H1 (cell line): ENCODE measurements at regions of chr12 and their contacts with region 1.

Region 1: DNA sequence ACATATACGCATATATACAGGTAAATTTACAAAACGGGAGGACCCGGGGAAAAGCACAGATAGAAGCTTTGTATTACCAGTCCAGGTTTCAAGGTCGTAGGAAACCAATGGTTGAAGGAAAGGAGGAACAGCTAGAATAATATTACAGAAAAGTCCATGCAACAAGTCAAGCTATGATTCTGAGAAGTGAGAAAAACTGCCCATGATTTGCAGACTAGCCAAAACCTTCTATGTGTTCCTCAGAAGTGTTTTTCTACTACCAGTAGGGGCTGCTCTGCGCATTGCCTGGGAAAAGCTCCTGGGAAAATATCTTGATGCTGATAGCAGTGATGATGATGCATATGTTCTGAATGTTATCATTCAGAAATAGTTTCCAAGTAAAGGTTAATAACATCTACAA is 2.2 kb downstream of the PDZRN4 start:
- DNase-seq: no peak
- H3K4me3 ChIP-seq: peak overlapping the region in 1 of 4 experiments; percentile 54; a peak in 2 of 8 replicates
- H3K27ac ChIP-seq: no peak overlapping the region
- H3K4me1 ChIP-seq: peaks cover 0 to 3% (median 0%) of the 10 kb centered on the region in 4 experiments; a peak in 3 of 7 replicates
- H3K27me3 ChIP-seq: peaks cover 25 to 38% (median 33%) of the 10 kb centered on the region in 4 experiments
- CTCF ChIP-seq: peak in 2 of 3 experiments; percentile 55 to 69; a peak in 2 of 4 replicates
- EP300 ChIP-seq: no peak
- POLR2A ChIP-seq: no peak
- RAD21 ChIP-seq: peak; percentile 69 to 77

Region 2: GRCh38 chr12:41202051-41202450 is 11.7 kb after region 1 on chr12:
- CTCF ChIA-PET with region 1: interaction called, 14 read pairs
- POLR2A ChIA-PET with region 1: no interaction called
- DNase-seq: no peak
- H3K4me3 ChIP-seq: no peak overlapping the region
- H3K27ac ChIP-seq: no peak overlapping the region
- H3K4me1 ChIP-seq: peaks cover 0 to 2% (median 0%) of the 10 kb centered on the region in 4 experiments; a peak in 2 of 7 replicates
- H3K27me3 ChIP-seq: no peaks in the 10 kb centered on the region
- CTCF ChIP-seq: no peak
- EP300 ChIP-seq: no peak
- POLR2A ChIP-seq: no peak
- RAD21 ChIP-seq: no peak